ENCODE measurements at regions of chr11 and their contacts with region 1.

Region 1: GRCh38 chr11:72363112-72363511 is 71.2 kb downstream of the CLPB start:
- DNase-seq: no peak
- CTCF ChIP-seq: no peak

Region 2: GRCh38 chr11:72321381-72321996 is 41.6 kb before region 1 on chr11:
- CTCF ChIA-PET with region 1: no interaction called
- POLR2A ChIA-PET with region 1: no interaction called
- DNase-seq: no peak
- CTCF ChIP-seq: no peak

Region 3: DNA sequence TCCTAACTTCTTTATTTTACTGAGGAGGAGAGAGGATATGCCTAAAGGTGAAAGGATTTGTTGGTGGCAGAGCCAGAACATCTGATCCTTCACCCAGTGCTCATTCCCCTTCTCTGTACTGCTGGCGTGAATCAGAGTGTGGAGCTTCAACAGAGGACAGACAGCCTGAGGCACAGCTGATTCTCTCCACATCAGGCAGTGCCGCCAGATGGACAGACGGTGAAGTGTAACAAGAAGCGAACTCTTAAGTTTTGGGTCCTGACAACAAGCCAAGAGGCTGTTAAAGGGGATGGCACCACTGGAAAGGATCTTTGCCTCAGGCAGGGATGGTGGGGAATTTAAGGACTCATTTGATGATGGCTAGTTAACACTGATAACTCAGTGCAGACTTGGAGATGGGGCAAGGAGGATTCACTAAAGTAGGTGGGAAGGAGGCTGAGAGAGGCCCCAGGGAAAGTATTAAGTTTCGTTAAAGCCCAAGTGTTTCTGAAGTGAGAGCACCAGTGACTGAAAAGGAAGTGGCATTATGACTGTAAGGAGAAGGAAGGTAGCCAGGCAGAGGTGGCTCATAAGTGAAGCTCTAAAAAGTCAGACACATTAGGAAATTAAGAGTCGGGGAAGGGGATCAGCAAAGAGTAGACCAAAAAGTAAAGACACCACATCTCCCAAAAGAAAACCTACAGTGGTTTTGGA is 10.1 kb before region 1 on chr11:
- CTCF ChIA-PET with region 1: interaction called, 10 read pairs
- POLR2A ChIA-PET with region 1: no interaction called
- DNase-seq: peak; percentile 45
- CTCF ChIP-seq: peak; percentile 36